ENCODE measurements at regions of chrX and their contacts with region 1.

Region 1: GRCh38 chrX:47560831-47561652 is at the start of gene ARAF:
- DNase-seq: peak; percentile 98
- H3K4me3 Mint-ChIP-seq: peak within 1 kb of the TSS; percentile 95
- H3K27ac Mint-ChIP-seq: peak within 1 kb of the TSS; percentile 97
- H3K4me1 Mint-ChIP-seq: peaks cover 28% of the 10 kb centered on the region
- H3K27me3 Mint-ChIP-seq: no peaks in the 10 kb centered on the region
- total RNA-seq, gene ARAF: 77.3 and 78.9 TPM in 2 replicates

Region 2: DNA sequence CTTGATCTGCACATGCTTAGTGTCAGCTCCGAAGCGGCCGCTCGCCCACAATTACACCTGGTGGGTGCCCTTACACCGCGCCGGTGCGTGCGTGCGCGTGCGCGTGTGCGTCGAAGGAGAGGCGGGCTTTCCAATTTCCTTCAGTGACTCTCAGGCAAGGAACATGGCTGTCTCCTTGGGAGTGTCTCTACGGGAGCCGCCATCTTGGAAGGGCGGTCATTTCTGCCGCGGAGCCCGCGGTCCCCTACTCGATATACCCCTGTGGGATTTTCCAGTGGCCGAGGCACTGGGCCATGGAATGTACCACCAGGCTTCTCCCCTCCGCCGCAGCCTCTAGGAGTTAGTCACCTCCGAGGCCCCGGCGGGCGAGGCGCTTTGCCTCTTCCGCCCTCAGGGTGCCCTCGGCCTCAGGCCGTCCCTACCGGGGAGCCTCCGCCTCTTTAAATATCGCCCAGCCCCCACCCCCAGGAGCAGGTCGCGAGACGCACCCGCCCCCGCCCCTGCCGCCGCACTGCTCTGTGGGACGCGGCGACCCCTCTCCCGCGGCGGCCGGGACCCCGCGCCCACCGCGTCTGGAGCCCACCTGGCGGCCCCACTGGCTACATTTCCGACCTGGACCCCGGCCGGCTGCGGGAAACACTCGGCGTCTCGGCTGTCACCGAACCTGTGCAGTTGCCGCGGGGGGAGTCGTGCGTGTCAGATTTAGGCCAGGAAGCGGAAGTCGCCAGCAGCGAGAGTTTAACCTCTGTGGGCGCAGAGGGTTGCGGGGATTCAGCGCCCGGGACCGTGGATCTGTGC is 78.3 kb before region 1 on chrX and contains the start of gene ZNF41:
- intact Hi-C with region 1: loop called (anchors 2 kb)
- DNase-seq: peak; percentile 90
- H3K4me3 Mint-ChIP-seq: peak within 1 kb of the TSS; percentile 97
- H3K27ac Mint-ChIP-seq: peak within 1 kb of the TSS; percentile 90
- H3K4me1 Mint-ChIP-seq: peaks cover 17% of the 10 kb centered on the region
- H3K27me3 Mint-ChIP-seq: no peaks in the 10 kb centered on the region
- total RNA-seq, gene ZNF41: 10.0 and 10.5 TPM in 2 replicates

Region 3: GRCh38 chrX:47515941-47516649 is 44.9 kb before region 1 on chrX:
- intact Hi-C with region 1: no loop called
- DNase-seq: no peak
- H3K4me3 Mint-ChIP-seq: no peak overlapping the region
- H3K27ac Mint-ChIP-seq: no peak overlapping the region
- H3K4me1 Mint-ChIP-seq: peaks cover 12% of the 10 kb centered on the region
- H3K27me3 Mint-ChIP-seq: peaks cover 7% of the 10 kb centered on the region

Region 4: DNA sequence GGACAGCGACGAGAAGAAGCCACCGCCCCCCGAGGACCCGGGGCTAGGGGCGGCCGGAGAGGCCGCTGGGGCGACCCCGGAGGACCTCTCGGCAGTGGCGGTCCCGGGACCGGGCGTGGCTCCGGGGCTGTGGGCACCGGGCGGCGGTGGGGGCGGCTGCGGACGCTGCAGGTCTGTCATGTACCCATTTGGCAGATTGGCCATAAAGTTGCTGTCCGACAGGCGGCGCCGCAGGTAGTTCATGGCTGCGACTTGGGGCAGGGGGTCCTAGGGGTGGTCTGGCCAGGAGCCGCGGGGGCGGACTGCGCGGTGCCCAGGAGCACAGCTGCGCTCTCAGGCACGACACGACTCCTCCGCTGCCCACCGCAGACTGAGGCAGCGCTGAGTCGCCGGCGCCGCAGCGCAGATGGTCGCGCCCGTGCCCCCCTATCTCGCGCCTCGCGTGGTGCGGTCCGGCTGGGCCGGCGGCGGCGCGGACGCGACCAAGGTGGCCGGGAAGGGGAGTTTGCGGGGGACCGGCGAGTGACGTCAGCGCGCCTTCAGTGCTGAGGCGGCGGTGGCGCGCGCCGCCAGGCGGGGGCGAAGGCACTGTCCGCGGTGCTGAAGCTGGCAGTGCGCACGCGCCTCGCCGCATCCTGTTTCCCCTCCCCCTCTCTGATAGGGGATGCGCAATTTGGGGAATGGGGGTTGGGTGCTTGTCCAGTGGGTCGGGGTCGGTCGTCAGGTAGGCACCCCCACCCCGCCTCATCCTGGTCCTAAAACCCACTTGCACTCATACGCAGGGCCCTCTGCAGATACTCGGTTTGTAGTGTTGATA is 58.7 kb after region 1 on chrX and contains the start of gene SYN1:
- intact Hi-C with region 1: loop called (anchors 2 kb)
- DNase-seq: peak; percentile 94
- H3K4me3 Mint-ChIP-seq: peak within 1 kb of the TSS; percentile 72
- H3K27ac Mint-ChIP-seq: no peak within 1 kb of the TSS
- H3K4me1 Mint-ChIP-seq: peaks cover 13% of the 10 kb centered on the region
- H3K27me3 Mint-ChIP-seq: peaks cover 31% of the 10 kb centered on the region
- total RNA-seq, gene SYN1: 0.49 and 0.54 TPM in 2 replicates

Region 5: GRCh38 chrX:47644557-47645091 is 83.6 kb after region 1 on chrX:
- intact Hi-C with region 1: no loop called
- DNase-seq: no peak
- H3K4me3 Mint-ChIP-seq: no peak overlapping the region
- H3K27ac Mint-ChIP-seq: peak overlapping the region; percentile 66
- H3K4me1 Mint-ChIP-seq: peaks cover 38% of the 10 kb centered on the region
- H3K27me3 Mint-ChIP-seq: no peaks in the 10 kb centered on the region

Region 6: GRCh38 chrX:47751670-47752069 is 190.6 kb after region 1 on chrX:
- intact Hi-C with region 1: loop called (anchors 10 kb)
- DNase-seq: peak; percentile 70
- H3K4me3 Mint-ChIP-seq: no peak overlapping the region
- H3K27ac Mint-ChIP-seq: no peak overlapping the region
- H3K4me1 Mint-ChIP-seq: no peaks in the 10 kb centered on the region
- H3K27me3 Mint-ChIP-seq: no peaks in the 10 kb centered on the region

Region 7: GRCh38 chrX:48021026-48021900 is 460.2 kb after region 1 on chrX:
- intact Hi-C with region 1: loop called (anchors 5 kb)
- DNase-seq: peak; percentile 89
- H3K4me3 Mint-ChIP-seq: peak overlapping the region; percentile 94
- H3K27ac Mint-ChIP-seq: peak overlapping the region; percentile 98
- H3K4me1 Mint-ChIP-seq: peaks cover 16% of the 10 kb centered on the region
- H3K27me3 Mint-ChIP-seq: no peaks in the 10 kb centered on the region

Measured in activated CD4-positive, alpha-beta T cell treated with anti-CD3 and anti-CD28 coated beads, Interleukin-2, amount 10 ng/mL, durations not matched to agents 24 days and 14 days (primary cell).